HEK293 (cell line): ENCODE measurements at regions of chr14 and their contacts with region 1.

Region 1: DNA sequence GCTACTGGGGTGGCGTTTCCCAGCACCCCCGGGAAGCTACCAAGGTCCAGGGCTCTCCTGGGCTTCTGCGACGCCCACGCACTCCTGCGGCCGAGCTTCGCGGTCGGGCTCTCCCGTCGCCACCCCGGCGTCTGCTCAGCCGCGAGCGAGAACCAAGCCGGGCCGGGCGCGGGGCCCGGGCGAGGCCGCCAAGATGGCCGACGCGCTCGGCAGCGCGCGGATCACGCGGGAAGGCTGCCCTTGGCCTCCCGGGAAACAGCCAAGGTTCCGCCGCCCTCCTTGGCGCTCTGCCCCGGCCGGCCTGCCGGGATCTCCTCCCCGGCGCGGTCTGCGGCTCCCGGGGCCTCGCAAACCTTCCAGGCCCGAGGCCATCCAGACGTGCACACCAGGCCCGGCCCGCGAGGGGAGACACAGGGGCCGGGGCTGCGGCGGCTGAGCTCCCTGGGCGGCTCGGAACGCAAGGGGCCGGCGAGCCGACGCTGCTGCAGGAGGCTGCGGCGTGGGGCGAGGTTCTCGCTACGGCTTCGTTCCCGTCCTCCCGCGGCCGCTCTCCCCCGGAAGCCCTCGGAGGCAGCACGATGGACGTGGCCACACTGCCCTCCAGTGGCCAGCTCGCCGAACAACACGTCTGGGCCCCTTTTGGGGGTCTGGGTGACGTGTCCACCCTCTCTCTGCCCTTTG is 23.5 kb upstream of the ZFP36L1 start:
- H3K4me3 ChIP-seq: peak overlapping the region; percentile 49
- H3K27ac ChIP-seq: peak overlapping the region; percentile 98
- H3K4me1 ChIP-seq: peaks cover 22% of the 10 kb centered on the region
- CTCF ChIP-seq: peak; percentile 95

Region 2: DNA sequence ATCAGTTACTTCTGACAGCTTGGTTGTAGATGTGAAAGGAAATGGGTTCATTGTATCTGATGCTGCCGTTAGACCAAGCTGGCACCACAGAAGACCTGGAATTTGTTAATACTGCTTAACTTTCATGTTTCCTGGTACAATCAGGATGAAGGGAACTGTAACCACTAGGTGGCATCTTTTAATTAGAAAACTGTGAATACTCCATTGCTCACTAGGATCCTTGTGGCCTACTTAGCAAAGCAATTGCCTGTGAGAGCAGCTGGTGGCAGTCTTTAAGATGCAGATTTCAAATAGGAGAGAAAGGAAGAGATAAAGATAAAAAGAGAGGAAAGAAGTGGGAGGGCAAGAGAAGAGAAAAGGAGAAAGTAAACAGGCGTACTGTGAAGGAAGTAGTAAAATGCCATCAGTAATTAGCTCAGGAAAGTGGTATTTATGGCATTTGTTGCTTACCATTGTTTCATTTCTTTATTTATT is 882.4 kb before region 1 on chr14:
- CTCF ChIA-PET with region 1: interaction called, 33 read pairs
- POLR2A ChIA-PET with region 1: no interaction called
- H3K4me3 ChIP-seq: no peak overlapping the region
- H3K27ac ChIP-seq: no peak overlapping the region
- H3K4me1 ChIP-seq: peaks cover 8% of the 10 kb centered on the region
- CTCF ChIP-seq: peak; percentile 83

Region 3: DNA sequence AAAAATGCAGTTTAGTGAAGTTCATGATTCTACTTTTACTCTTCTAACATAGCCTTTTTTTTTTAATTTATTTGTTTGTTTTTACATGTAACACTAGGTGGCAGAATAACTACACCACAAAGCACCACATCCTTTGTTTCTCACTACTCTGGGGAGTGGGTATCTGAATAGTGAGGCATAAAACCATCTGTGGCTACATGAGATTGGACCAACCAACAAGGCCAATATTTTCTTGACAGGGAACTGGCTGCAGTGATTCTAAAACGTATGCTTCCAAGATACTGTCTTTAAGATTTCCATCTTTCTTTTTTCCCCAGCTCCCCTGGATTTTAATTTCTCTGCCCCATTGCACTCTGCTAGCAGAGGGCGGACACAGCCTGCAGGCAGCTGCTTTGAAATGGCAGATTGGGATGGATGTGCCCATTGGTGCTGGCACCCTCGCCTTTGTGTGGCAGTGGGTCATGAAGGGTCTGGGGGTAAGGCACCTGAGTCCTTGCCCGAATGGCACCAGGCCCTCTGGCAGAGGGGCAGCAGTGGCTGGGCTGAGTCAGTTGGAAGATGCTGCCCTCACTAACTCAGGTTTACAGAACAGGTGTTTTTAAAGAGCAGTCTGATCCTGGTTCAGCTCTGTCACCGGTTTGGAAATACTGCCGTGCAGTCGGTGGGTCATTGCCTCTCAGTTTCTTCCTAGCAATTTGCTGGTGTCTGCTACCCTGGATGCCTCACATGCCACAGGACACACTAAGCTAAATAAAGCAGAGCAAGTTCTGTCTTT is 567.7 kb before region 1 on chr14:
- CTCF ChIA-PET with region 1: interaction called, 57 read pairs
- POLR2A ChIA-PET with region 1: no interaction called
- H3K4me3 ChIP-seq: no peak overlapping the region
- H3K27ac ChIP-seq: peak overlapping the region; percentile 62; the same call in 1 of the 2 replicates
- H3K4me1 ChIP-seq: peaks cover 39% of the 10 kb centered on the region
- CTCF ChIP-seq: no peak

Region 4: DNA sequence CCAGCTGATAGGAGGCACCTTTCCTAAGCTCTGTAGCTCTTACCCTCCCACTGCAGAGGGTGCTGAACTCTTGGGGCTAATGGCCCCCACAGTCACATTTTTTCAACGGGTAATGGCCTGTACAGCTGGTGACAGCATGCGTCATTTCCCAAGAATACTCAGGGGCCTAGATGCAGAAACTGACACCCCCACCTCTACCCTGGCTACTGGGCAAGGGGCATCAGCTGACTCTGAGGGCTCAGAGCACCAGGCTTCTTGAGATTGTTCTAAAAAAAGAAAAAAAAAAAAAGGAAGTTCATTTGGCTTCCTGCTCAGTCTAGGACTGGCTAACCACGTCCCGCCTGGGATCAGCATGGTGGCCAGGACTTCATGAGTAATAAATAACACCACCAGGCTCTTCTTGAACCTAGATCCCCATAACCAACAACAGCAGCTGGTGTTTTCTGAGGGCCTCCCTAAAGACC is 58.8 kb before region 1 on chr14:
- CTCF ChIA-PET with region 1: no interaction called
- POLR2A ChIA-PET with region 1: no interaction called
- H3K4me3 ChIP-seq: no peak overlapping the region
- H3K27ac ChIP-seq: no peak overlapping the region
- H3K4me1 ChIP-seq: peaks cover 5% of the 10 kb centered on the region
- CTCF ChIP-seq: no peak

Region 5: GRCh38 chr14:68795597-68796417 is 20.6 kb before region 1 on chr14:
- CTCF ChIA-PET with region 1: interaction called, 13 read pairs
- POLR2A ChIA-PET with region 1: interaction called, 14 read pairs
- H3K4me3 ChIP-seq: peak overlapping the region; percentile 65
- H3K27ac ChIP-seq: peak overlapping the region; percentile 99
- H3K4me1 ChIP-seq: peaks cover 3% of the 10 kb centered on the region; the same call in 1 of the 2 replicates
- CTCF ChIP-seq: peak; percentile 74

Region 6: DNA sequence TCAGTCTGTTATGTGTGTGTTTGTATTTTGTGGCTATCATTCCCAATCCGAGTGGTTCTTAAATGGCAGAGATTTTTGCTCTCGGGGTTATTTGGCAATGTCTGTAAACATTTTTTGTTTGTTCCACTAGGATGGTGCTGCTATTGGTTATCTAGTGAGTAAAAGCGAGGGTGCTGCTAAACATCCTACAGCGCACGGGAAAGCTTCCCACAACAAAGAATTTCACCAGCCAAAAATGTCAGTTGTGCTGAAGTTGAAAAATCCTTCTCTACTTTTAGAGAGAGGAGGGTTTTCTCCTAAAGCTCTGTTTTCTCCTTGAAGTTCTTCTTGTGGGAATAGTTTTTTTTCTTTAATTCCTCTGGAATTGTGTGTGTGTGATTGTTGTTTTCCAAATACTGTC is 377.3 kb after region 1 on chr14:
- CTCF ChIA-PET with region 1: no interaction called
- POLR2A ChIA-PET with region 1: no interaction called
- H3K4me3 ChIP-seq: no peak overlapping the region
- H3K27ac ChIP-seq: no peak overlapping the region
- H3K4me1 ChIP-seq: peaks cover 8% of the 10 kb centered on the region
- CTCF ChIP-seq: no peak